Calu3 (cell line): ENCODE measurements at regions of chr1 and their contacts with region 1.

Region 1: DNA sequence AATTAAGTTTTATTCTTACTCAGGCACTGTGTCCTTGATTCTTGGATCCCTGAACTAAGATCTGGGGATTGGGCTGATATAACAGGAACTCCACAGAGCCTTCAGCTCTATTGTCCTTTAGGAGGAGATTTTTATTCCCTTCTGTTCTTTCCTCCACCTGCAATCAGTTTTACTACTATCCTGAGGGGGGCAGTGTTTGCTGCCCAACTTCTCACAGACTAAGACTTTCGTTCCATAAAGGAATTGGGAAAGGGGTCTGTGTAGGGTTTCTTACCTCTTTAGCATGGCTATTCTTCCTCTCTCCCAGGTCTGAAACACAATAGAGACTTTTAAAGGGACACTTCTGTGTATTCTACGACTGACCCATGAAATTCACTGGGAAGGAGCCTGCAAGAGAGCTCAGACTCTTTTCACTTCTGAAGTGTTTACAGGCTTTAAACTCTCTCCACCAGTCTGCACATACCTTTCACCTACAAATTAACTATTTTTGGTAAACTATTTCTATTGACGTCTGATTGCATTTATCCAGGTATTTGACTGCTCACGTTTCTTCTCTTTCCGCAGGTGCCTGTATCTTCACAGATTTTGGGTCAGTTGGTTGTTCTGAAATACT is 103.3 kb upstream of the DEPDC1 start:
- DNase-seq: peak; percentile 40
- H3K4me3 Mint-ChIP-seq: no peak overlapping the region
- H3K27ac Mint-ChIP-seq: no peak overlapping the region
- H3K4me1 Mint-ChIP-seq: peaks cover 21% of the 10 kb centered on the region
- H3K27me3 Mint-ChIP-seq: no peaks in the 10 kb centered on the region
- CTCF ChIP-seq: peak; percentile 55

Region 2: GRCh38 chr1:68615312-68615711 is 15.2 kb after region 1 on chr1:
- CTCF ChIA-PET with region 1: no interaction called
- intact Hi-C with region 1: no loop called
- DNase-seq: no peak
- H3K4me3 Mint-ChIP-seq: no peak overlapping the region
- H3K27ac Mint-ChIP-seq: no peak overlapping the region
- H3K4me1 Mint-ChIP-seq: no peaks in the 10 kb centered on the region
- H3K27me3 Mint-ChIP-seq: no peaks in the 10 kb centered on the region
- CTCF ChIP-seq: no peak

Region 3: DNA sequence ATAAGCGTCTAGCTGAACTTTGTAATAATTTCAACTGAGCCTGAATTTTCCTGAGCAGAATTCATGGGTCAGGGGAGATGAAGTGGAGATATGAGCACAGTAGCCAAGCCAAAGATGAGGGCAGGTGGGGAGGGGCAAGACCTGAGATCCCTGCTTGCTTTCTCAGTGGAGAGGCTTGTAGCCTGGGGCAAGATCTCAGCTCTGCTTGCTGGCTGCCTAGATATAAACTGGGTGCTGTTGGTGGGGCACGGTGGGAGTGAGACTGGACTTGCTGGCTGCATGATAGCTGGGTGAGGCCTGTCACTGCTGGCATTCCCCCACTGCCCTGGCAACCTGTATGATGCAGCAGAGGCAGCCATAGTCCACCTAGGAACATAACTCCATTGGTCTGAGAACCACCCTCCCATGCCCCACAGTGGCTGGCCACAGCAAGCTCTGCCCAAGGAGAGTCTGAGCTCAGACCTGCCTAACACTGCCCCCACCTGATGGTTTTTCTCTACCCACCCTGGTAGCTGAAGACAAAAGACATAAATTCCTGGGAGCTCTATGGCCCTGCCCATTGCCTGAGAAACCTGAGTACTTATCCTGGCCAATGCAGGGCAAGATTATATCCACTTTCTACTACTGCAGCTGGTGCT is 158.5 kb after region 1 on chr1:
- CTCF ChIA-PET with region 1: interaction called, 5 read pairs
- intact Hi-C with region 1: loop called (anchors 5 kb)
- DNase-seq: peak; percentile 27
- H3K4me3 Mint-ChIP-seq: no peak overlapping the region
- H3K27ac Mint-ChIP-seq: no peak overlapping the region
- H3K4me1 Mint-ChIP-seq: no peaks in the 10 kb centered on the region
- H3K27me3 Mint-ChIP-seq: no peaks in the 10 kb centered on the region
- CTCF ChIP-seq: no peak

Region 4: DNA sequence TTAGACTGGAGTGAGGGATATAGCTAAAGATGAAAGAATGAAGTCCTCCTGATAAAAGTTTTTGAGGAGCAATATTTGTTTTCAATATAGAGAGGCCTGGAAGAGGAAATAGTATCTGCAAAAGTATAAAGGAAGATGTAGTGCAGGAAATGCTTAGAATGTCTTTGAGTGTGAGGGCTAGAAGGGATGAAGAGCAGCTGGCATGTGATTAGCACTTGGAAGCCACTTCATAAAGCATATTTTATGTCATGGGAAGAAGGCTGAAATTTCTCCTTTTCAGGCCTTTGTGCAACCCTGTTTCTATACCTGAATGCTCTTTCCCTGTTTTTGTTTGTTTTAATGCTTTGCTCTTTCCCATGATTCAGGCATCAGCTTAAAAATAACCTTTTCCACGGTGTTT is 220.0 kb after region 1 on chr1:
- CTCF ChIA-PET with region 1: no interaction called
- intact Hi-C with region 1: loop called (anchors 10 kb)
- DNase-seq: no peak
- H3K4me3 Mint-ChIP-seq: no peak overlapping the region
- H3K27ac Mint-ChIP-seq: no peak overlapping the region
- H3K4me1 Mint-ChIP-seq: no peaks in the 10 kb centered on the region
- H3K27me3 Mint-ChIP-seq: no peaks in the 10 kb centered on the region
- CTCF ChIP-seq: no peak

Region 5: DNA sequence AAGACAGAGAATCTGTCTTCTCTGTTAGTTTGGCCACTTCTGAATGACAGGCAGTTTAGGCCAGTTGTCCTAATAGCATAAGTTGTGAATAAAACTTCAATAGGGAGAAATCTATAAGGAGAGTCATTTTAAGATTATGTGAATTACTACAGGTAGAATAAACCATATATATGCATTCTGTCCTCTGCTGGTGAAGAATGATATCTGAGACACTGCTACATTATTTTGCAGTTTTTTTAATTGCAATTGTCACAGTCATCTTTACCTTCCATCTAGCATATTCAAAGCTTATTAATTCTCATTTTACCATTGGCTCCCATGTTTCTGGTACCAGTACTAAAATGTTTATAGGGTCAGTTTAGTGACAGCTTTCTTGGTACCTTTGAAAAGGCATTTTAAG is 416.3 kb after region 1 on chr1:
- CTCF ChIA-PET with region 1: no interaction called
- intact Hi-C with region 1: loop called (anchors 5 kb)
- DNase-seq: no peak
- H3K4me3 Mint-ChIP-seq: no peak overlapping the region
- H3K27ac Mint-ChIP-seq: no peak overlapping the region
- H3K4me1 Mint-ChIP-seq: no peaks in the 10 kb centered on the region
- H3K27me3 Mint-ChIP-seq: no peaks in the 10 kb centered on the region
- CTCF ChIP-seq: no peak

Region 6: DNA sequence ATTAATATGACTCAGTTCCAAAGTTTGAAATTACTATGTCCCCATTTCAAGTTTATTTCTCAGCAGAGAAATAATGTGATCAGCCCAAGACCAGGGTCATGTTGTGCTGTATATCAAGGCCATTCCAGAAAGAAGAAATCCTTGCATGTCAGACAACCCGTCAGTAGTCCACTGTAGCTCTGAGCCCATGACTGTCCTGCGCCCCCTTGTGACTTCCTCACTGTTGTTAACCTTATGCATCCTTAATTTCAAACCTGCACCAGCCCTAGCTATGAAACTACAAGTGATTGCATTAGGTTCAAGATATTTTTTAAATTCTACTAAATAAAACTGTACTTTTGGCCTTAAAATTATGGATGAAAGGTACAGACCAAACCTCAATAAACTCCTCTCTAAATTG is 1100.6 kb after region 1 on chr1:
- CTCF ChIA-PET with region 1: no interaction called
- intact Hi-C with region 1: loop called (anchors 10 kb)
- DNase-seq: peak; percentile 60
- H3K4me3 Mint-ChIP-seq: no peak overlapping the region
- H3K27ac Mint-ChIP-seq: no peak overlapping the region
- H3K4me1 Mint-ChIP-seq: peaks cover 5% of the 10 kb centered on the region
- H3K27me3 Mint-ChIP-seq: no peaks in the 10 kb centered on the region
- CTCF ChIP-seq: peak; percentile 38

Region 7: GRCh38 chr1:69737527-69738185 is 1137.5 kb after region 1 on chr1:
- CTCF ChIA-PET with region 1: interaction called, 7 read pairs
- intact Hi-C with region 1: loop called (anchors 1 kb)
- DNase-seq: peak; percentile 49
- H3K4me3 Mint-ChIP-seq: no peak overlapping the region
- H3K27ac Mint-ChIP-seq: no peak overlapping the region
- H3K4me1 Mint-ChIP-seq: no peaks in the 10 kb centered on the region
- H3K27me3 Mint-ChIP-seq: no peaks in the 10 kb centered on the region
- CTCF ChIP-seq: peak; percentile 67